ENCODE measurements at regions of chr19 and their contacts with region 1.

Region 1: GRCh38 chr19:35066691-35067563 is 25.4 kb downstream of the HPN start:
- DNase-seq: peak; percentile 68 to 93 (median 85)
- ATAC-seq: peak; percentile 93
- H3K4me3 ChIP-seq: no peak overlapping the region
- H3K27ac ChIP-seq: no peak overlapping the region
- H3K4me1 ChIP-seq: no peaks in the 10 kb centered on the region
- H3K27me3 ChIP-seq: no peaks in the 10 kb centered on the region
- CTCF ChIP-seq: peak; percentile 87 to 90

Region 2: GRCh38 chr19:34926685-34927375 is 140.1 kb before region 1 on chr19 and contains the start of gene ZNF30:
- intact Hi-C with region 1: no loop called
- DNase-seq: peak; percentile 83 to 96 (median 94)
- ATAC-seq: peak; percentile 100
- H3K4me3 ChIP-seq: peak within 1 kb of the TSS; percentile 54 to 73
- H3K27ac ChIP-seq: peak within 1 kb of the TSS; percentile 74 to 77
- H3K4me1 ChIP-seq: peaks cover 7 to 15% of the 10 kb centered on the region in 2 donors
- H3K27me3 ChIP-seq: peaks cover 0 to 15% of the 10 kb centered on the region in 2 donors
- CTCF ChIP-seq: no peak
- polyA plus RNA-seq, gene ZNF30: 6.4 to 10.4 (median 8.4) TPM

Region 3: DNA sequence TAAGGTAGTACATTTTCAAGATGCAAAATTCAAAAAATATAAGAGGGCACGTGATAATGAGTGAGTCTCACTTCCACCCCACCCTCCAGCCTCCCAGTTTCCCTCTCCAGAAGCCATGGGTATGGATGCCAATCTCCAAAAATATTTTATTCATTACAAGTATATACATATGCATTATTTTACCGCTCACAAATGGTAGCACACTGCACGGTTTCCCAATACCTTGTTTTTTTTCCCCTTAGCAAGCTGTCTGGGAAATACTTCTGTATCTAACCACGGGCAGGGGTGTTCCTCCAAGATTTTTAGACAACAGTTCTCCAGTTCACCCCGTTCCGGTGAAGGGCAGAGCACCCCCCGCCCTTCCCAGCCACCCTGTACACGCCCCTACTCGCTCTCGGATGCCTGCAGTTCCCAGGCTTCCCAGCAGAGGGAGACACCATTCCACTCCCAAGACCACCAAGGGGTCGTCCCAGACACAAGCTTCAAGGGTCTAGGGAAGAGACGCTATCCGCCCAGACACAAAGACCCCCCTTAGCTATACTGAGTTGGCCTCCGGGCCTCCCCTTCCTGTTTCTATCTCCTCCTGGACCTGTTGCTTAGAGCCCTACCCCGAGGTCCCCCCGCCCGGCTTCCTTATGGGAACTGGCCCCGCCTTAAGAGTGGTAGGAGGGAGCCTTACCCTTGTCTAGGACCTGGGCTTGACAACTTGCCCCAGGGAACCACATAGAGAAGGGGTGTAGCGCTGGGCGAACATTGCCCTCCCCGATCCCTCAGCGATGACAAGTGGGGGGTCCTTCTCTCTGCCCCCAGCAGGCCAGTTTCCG is 47.6 kb after region 1 on chr19:
- intact Hi-C with region 1: no loop called
- DNase-seq: peak; percentile 56 to 86 (median 84)
- ATAC-seq: peak; percentile 71
- H3K4me3 ChIP-seq: peak overlapping the region; percentile 10 to 41
- H3K27ac ChIP-seq: peak overlapping the region; percentile 45 to 53
- H3K4me1 ChIP-seq: peaks cover 0 to 18% of the 10 kb centered on the region in 2 donors
- H3K27me3 ChIP-seq: peaks cover 0 to 4% of the 10 kb centered on the region in 2 donors
- CTCF ChIP-seq: peak; percentile 92 to 97

Region 4: GRCh38 chr19:35135389-35135909 is 68.5 kb after region 1 on chr19:
- intact Hi-C with region 1: loop called in 1 of 2 experiments (anchors 10 kb)
- DNase-seq: peak in 3 of 4 donors; percentile 81 to 90 (median 89)
- ATAC-seq: peak; percentile 83
- H3K4me3 ChIP-seq: no peak overlapping the region
- H3K27ac ChIP-seq: no peak overlapping the region
- H3K4me1 ChIP-seq: peaks cover 0 to 20% of the 10 kb centered on the region in 2 donors
- H3K27me3 ChIP-seq: peaks cover 0 to 28% of the 10 kb centered on the region in 2 donors
- CTCF ChIP-seq: peak; percentile 77 to 93

Region 5: GRCh38 chr19:35154525-35155406 is 87.8 kb after region 1 on chr19 and contains the start of gene FXYD5:
- intact Hi-C with region 1: no loop called
- DNase-seq: peak in 3 of 4 donors; percentile 64 to 96 (median 83)
- ATAC-seq: peak; percentile 90
- H3K4me3 ChIP-seq: peak within 1 kb of the TSS; percentile 64 to 84
- H3K27ac ChIP-seq: peak within 1 kb of the TSS; percentile 57 to 86
- H3K4me1 ChIP-seq: peaks cover 9 to 42% of the 10 kb centered on the region in 2 donors
- H3K27me3 ChIP-seq: peaks cover 0 to 8% of the 10 kb centered on the region in 2 donors
- CTCF ChIP-seq: peak in 1 of 2 donors; percentile 12
- polyA plus RNA-seq, gene FXYD5: 29.0 to 33.0 (median 31.3) TPM